ENCODE measurements at regions of chr11 and their contacts with region 1.

Region 1: DNA sequence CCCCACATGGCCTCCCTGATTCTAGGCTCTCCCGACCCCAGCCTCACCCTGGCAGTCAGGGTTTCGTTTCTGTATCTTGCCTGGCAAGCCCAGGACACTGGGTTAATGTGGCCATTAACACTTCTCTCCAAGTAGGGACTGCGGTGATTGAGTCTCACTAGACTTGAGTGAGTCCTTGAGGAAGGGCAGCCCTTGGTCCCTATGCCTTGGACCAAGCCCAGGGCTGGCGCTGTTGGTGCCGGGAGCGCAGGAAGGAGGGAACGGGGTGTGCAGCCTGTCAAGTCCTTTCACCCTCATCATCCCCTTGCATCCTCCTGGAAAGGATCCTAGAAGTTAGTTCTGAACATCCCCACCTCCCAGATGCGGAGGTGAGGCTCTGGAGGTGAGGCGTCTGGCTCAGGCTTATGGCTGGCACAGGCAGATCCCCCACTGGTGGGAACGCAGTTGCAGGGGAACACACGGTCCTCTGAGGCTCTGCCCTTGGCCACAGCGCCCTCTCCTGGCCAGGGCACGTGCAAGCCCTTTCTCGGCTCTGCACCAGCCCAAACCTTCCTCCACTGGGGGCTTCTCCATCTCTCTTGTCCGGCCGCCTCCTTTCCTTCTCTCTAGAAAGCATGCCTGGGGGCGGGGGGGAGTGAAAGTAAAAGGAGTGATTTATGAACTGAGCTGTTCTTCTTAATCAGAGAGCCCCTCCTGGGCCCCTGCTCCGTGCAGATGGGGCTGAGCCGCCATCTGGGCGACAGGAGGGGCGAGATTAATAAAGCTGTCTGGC is 56.7 kb downstream of the TP53I11 start:
- DNase-seq: peak; percentile 69 to 84 (median 83)
- ATAC-seq: peak; percentile 84 to 92 (median 88)
- H3K4me3 ChIP-seq: no peak overlapping the region
- H3K27ac ChIP-seq: peak overlapping the region in 8 of 12 donors; percentile 18 to 78 (median 57)
- H3K4me1 ChIP-seq: peaks cover 0 to 39% (median 20%) of the 10 kb centered on the region in 12 donors
- H3K27me3 ChIP-seq: no peaks in the 10 kb centered on the region
- CTCF ChIP-seq: peak; percentile 80 to 95 (median 88)
- POLR2A ChIP-seq: no peak

Region 2: GRCh38 chr11:44621140-44621681 is 272.8 kb before region 1 on chr11:
- intact Hi-C with region 1: loop called in 7 of 10 experiments (anchors 1 to 5 kb)
- DNase-seq: peak; percentile 74 to 91 (median 77)
- ATAC-seq: peak; percentile 65 to 79 (median 66)
- H3K4me3 ChIP-seq: peak overlapping the region in 8 of 12 donors; percentile 19 to 48 (median 34)
- H3K27ac ChIP-seq: no peak overlapping the region
- H3K4me1 ChIP-seq: peaks cover 3 to 48% (median 28%) of the 10 kb centered on the region in 12 donors
- H3K27me3 ChIP-seq: no peaks in the 10 kb centered on the region
- CTCF ChIP-seq: peak in 11 of 12 donors; percentile 94 to 99 (median 96)
- POLR2A ChIP-seq: no peak

Region 3: GRCh38 chr11:44760917-44761550 is 133.0 kb before region 1 on chr11:
- intact Hi-C with region 1: no loop called
- DNase-seq: peak in 4 of 5 donors; percentile 63 to 83 (median 69)
- ATAC-seq: peak; percentile 88 to 94 (median 90)
- H3K4me3 ChIP-seq: no peak overlapping the region
- H3K27ac ChIP-seq: peak overlapping the region; percentile 70 to 92 (median 90)
- H3K4me1 ChIP-seq: peaks cover 18 to 81% (median 60%) of the 10 kb centered on the region in 12 donors
- H3K27me3 ChIP-seq: no peaks in the 10 kb centered on the region
- CTCF ChIP-seq: peak in 6 of 12 donors; percentile 5 to 24 (median 16)
- POLR2A ChIP-seq: no peak

Region 4: DNA sequence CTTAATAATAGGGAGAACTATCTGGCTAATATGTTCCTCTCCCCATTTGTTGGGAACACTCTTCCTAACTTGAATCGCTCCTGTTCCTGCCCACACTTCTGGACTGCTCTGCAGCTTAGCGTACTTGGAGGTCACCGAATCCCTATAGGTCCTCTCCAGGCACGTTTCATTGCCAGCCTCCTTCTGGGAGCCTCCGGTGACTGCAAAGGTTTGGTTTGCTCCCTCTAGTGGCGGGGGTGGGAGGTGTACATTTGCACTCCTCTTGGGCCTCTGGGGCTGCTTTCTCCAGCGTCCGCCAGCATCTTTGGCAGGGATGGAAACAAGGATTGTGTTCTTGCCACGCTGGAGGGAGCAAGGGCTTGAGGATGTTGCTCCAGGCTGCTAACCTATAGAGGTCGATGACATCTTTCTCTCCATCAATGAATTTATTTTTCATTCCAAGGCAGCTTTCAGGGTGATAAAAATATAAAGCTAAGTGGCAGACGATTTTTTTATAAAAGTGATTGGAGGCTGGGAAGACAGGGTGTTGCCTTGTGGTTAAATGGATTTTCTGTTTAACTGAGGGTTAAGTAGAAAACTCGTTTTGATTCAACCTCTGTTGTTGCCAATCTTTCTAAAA is 118.6 kb before region 1 on chr11:
- intact Hi-C with region 1: loop called in 4 of 10 experiments (anchors 5 to 10 kb)
- DNase-seq: peak; percentile 50 to 75 (median 71)
- ATAC-seq: peak; percentile 21 to 53 (median 45)
- H3K4me3 ChIP-seq: no peak overlapping the region
- H3K27ac ChIP-seq: peak overlapping the region in 11 of 12 donors; percentile 29 to 92 (median 76)
- H3K4me1 ChIP-seq: peaks cover 7 to 91% (median 65%) of the 10 kb centered on the region in 12 donors
- H3K27me3 ChIP-seq: no peaks in the 10 kb centered on the region
- CTCF ChIP-seq: peak; percentile 56 to 77 (median 66)
- POLR2A ChIP-seq: no peak

Region 5: DNA sequence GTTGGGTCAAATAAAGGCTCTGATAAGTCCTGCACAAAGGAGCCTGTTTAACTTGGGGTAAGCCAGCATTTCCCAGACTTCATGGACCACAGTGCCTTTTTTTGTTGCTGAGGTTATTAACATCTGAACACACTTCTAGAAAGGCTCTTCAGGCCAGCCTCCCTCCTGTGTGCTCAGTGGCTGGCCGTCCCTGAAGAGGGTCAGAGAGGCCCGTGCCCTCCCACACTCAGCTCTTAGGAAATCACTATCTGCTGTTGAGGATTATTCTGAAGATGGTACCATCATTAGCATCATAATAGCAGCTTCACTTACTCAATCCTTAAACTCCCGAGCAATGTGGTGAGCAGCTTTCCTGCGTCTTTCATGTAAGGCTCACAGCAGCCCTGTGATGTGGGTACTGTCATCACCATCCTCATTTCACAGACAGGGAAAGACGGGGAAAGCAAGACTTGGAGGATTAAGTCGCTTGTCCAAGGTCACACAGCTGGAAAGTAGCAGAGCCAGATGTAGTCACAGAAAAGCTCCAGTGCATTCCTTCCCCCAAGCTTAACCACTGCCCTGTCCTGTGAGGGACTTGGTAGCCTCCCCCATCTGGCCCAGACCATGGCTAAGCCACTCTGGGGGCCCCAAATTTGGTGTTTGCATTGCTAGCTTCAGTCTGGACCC is 96.0 kb before region 1 on chr11:
- intact Hi-C with region 1: no loop called
- DNase-seq: no peak
- ATAC-seq: peak in 1 of 4 donors; percentile 25
- H3K4me3 ChIP-seq: no peak overlapping the region
- H3K27ac ChIP-seq: no peak overlapping the region
- H3K4me1 ChIP-seq: peaks cover 0 to 41% (median 8%) of the 10 kb centered on the region in 12 donors
- H3K27me3 ChIP-seq: no peaks in the 10 kb centered on the region
- CTCF ChIP-seq: no peak
- POLR2A ChIP-seq: no peak

Region 6: GRCh38 chr11:44814881-44815592 is 79.0 kb before region 1 on chr11:
- intact Hi-C with region 1: no loop called
- DNase-seq: no peak
- ATAC-seq: peak in 1 of 4 donors; percentile 15
- H3K4me3 ChIP-seq: no peak overlapping the region
- H3K27ac ChIP-seq: peak overlapping the region in 7 of 12 donors; percentile 10 to 47 (median 36)
- H3K4me1 ChIP-seq: peaks cover 6 to 96% (median 74%) of the 10 kb centered on the region in 12 donors
- H3K27me3 ChIP-seq: no peaks in the 10 kb centered on the region
- CTCF ChIP-seq: no peak
- POLR2A ChIP-seq: no peak

Region 7: DNA sequence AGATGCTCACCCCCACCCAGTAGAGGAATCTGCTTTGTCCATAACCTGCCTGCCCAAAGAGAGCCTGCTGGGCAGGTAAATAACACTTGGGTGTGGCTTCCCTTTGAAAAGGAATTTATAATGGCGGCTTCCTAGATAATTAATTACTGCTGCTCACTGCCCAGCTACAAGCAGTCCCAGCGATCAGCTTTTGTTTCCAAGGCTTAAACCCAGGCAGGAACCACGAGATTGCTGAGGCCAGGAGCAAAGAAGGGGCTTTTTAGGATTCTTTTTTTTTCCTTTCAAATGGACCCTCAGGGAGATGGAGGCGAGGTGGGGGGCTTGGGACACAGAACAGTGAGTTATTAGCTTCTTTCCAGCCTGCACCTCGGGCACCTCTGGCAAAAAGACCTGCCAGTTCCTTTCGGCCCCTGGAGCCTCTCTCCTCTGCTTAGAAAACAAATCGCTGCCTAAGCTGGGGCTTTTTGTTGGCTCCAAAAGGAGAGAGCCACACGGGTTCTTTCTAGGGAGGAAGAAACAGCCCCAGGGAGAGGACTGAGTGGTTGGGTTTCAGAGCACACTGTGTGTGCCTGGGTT is 60.1 kb before region 1 on chr11:
- intact Hi-C with region 1: loop called in 1 of 10 experiments (anchors 5 kb)
- DNase-seq: no peak
- ATAC-seq: no peak
- H3K4me3 ChIP-seq: no peak overlapping the region
- H3K27ac ChIP-seq: peak overlapping the region in 10 of 12 donors; percentile 3 to 80 (median 39)
- H3K4me1 ChIP-seq: peaks cover 0 to 47% (median 25%) of the 10 kb centered on the region in 12 donors
- H3K27me3 ChIP-seq: no peaks in the 10 kb centered on the region
- CTCF ChIP-seq: no peak
- POLR2A ChIP-seq: no peak

Region 8: GRCh38 chr11:44911029-44911814 is 17.2 kb after region 1 on chr11:
- intact Hi-C with region 1: loop called in 1 of 10 experiments (anchors 1 kb)
- DNase-seq: peak; percentile 81 to 91 (median 89)
- ATAC-seq: peak; percentile 67 to 82 (median 71)
- H3K4me3 ChIP-seq: peak overlapping the region in 3 of 12 donors; percentile 8 to 29 (median 8)
- H3K27ac ChIP-seq: peak overlapping the region in 7 of 12 donors; percentile 6 to 58 (median 31)
- H3K4me1 ChIP-seq: peaks cover 0 to 47% (median 26%) of the 10 kb centered on the region in 12 donors
- H3K27me3 ChIP-seq: no peaks in the 10 kb centered on the region
- CTCF ChIP-seq: peak; percentile 84 to 96 (median 90)
- POLR2A ChIP-seq: no peak

Measured in heart left ventricle (tissue), 16 donors.